ENCODE measurements at regions of chr5 and their contacts with region 1.

Region 1: DNA sequence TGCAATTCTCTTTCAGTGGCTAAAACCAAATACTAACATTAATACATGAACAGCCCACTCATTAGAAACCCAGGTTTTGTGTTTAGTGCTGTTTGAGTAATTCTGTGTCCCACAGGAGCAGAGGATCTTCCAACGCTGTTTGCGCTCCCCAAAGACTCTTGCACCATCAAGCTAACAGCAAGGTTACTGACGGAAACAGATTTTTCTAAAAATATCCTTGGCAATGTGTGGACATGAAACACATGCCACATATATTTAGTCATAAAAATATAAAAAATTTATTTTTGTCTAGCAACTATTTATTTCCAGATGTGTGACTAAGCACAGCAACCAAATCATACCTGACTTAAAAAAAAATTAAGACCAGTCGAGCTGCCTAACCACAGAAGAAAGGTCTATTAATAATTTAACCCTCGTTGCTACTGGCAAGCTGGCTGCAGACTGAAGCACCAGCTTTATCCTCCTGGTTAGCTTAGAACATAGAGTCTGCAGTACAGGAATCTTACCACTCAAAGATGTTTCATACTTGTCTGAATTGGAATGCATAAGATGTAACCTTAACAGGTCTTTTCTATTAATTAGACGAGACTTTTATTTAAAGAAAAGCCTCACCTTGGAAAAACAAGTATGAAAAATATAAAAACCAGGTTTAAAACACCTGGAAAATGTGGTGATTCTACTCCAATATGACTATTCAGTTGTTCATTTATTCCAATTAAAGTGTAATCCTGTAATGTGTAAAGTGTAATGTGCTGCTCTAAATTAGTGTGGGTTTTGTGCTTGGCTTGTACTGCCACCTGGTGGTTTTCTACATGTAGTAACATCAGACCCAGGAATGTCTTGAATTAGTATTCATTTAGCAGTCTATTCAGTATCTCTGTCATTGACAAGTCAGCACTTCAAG is 272.5 kb downstream of the EPB41L4A start:
- DNase-seq: peak; percentile 69
- H3K4me3 Mint-ChIP-seq: no peak overlapping the region
- H3K27ac Mint-ChIP-seq: no peak overlapping the region
- H3K4me1 Mint-ChIP-seq: no peaks in the 10 kb centered on the region
- H3K27me3 Mint-ChIP-seq: no peaks in the 10 kb centered on the region
- CTCF ChIP-seq: peak; percentile 72

Region 2: DNA sequence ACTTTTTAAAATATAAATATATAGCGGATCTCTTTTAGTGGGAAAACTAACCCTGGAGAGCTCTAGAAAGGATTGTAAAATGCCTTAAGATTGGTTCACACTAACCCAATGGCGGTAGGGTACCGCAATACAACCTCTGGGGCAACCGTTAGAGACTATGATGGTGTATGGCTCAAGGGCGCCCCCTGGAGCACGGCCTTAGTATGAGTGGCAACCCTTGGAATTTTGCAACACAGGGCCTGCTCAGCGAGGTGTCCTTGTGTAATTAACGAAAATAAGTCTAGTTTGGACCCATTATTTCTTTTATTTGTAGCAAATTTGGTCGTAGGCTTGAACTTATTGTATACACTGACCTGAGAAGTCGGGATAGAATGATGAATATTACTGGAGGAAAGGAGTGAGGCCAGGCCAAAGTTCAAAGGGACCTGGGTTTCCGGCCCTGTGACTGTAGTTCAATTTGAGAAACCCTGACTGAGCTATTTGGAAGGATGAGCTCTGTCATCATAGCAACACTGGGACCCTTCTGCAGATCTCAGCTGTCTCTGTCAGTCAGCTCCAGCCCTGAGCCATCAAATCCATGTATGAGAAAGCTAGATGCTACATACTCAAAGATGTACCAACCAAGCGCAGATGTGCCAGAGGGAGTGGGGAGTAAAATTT is 867.6 kb before region 1 on chr5:
- CTCF ChIA-PET with region 1: no interaction called
- intact Hi-C with region 1: loop called (anchors 10 kb)
- DNase-seq: peak; percentile 90
- H3K4me3 Mint-ChIP-seq: no peak overlapping the region
- H3K27ac Mint-ChIP-seq: no peak overlapping the region
- H3K4me1 Mint-ChIP-seq: no peaks in the 10 kb centered on the region
- H3K27me3 Mint-ChIP-seq: no peaks in the 10 kb centered on the region
- CTCF ChIP-seq: peak; percentile 96

Region 3: GRCh38 chr5:111550279-111551020 is 596.1 kb before region 1 on chr5:
- CTCF ChIA-PET with region 1: interaction called, 17 read pairs
- intact Hi-C with region 1: loop called (anchors 1 kb)
- DNase-seq: peak; percentile 88
- H3K4me3 Mint-ChIP-seq: no peak overlapping the region
- H3K27ac Mint-ChIP-seq: no peak overlapping the region
- H3K4me1 Mint-ChIP-seq: peaks cover 9% of the 10 kb centered on the region
- H3K27me3 Mint-ChIP-seq: no peaks in the 10 kb centered on the region
- CTCF ChIP-seq: peak; percentile 45

Region 4: DNA sequence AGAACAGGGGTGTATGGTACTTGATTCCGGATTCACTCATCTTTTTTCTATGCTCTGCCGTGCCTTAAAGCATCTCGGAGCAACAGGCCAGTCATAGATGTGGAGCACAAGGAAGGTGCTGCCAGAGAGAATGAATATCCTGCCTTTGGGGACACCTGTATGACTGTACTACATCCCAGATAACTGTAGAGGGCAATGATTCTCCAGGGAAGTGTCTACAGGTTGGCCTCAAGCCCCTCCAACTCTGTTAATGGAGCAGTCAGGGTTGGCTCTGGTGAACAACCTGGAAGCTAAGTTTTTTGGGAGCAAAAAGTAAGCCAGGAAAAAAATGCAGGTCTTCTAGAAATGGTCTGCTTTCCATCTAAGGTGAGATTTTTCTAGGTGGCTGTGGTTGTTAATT is 460.6 kb before region 1 on chr5:
- CTCF ChIA-PET with region 1: no interaction called
- intact Hi-C with region 1: loop called (anchors 1 kb)
- DNase-seq: no peak
- H3K4me3 Mint-ChIP-seq: no peak overlapping the region
- H3K27ac Mint-ChIP-seq: no peak overlapping the region
- H3K4me1 Mint-ChIP-seq: peaks cover 10% of the 10 kb centered on the region
- H3K27me3 Mint-ChIP-seq: no peaks in the 10 kb centered on the region
- CTCF ChIP-seq: peak; percentile 39

Region 5: GRCh38 chr5:111830333-111830732 is 316.2 kb before region 1 on chr5:
- CTCF ChIA-PET with region 1: no interaction called
- intact Hi-C with region 1: loop called (anchors 1 kb)
- DNase-seq: peak; percentile 61
- H3K4me3 Mint-ChIP-seq: no peak overlapping the region
- H3K27ac Mint-ChIP-seq: peak overlapping the region; percentile 64
- H3K4me1 Mint-ChIP-seq: peaks cover 21% of the 10 kb centered on the region
- H3K27me3 Mint-ChIP-seq: no peaks in the 10 kb centered on the region
- CTCF ChIP-seq: no peak

Region 6: GRCh38 chr5:112087222-112087621 is 59.4 kb before region 1 on chr5:
- CTCF ChIA-PET with region 1: no interaction called
- intact Hi-C with region 1: no loop called
- DNase-seq: no peak
- H3K4me3 Mint-ChIP-seq: no peak overlapping the region
- H3K27ac Mint-ChIP-seq: no peak overlapping the region
- H3K4me1 Mint-ChIP-seq: no peaks in the 10 kb centered on the region
- H3K27me3 Mint-ChIP-seq: no peaks in the 10 kb centered on the region
- CTCF ChIP-seq: no peak